ENCODE measurements at regions of chr16 and their contacts with region 1.

Region 1: GRCh38 chr16:24504472-24505345 is 34.7 kb upstream of the RBBP6 start:
- DNase-seq: peak; percentile 79
- ATAC-seq: peak; percentile 80
- H3K4me3 ChIP-seq: no peak overlapping the region
- H3K4me3 Mint-ChIP-seq: no peak overlapping the region
- H3K27ac ChIP-seq: no peak overlapping the region
- H3K27ac Mint-ChIP-seq: no peak overlapping the region
- H3K4me1 ChIP-seq: no peaks in the 10 kb centered on the region
- H3K4me1 Mint-ChIP-seq: peaks cover 1% of the 10 kb centered on the region
- H3K27me3 ChIP-seq: peaks cover 0 to 9% (median 1%) of the 10 kb centered on the region in 4 experiments
- H3K27me3 Mint-ChIP-seq: peaks cover 35% of the 10 kb centered on the region
- CTCF ChIP-seq: peak; percentile 87

Region 2: GRCh38 chr16:23729503-23730424 is 774.9 kb before region 1 on chr16:
- CTCF ChIA-PET with region 1: interaction called, 14 read pairs
- POLR2A ChIA-PET with region 1: no interaction called
- intact Hi-C with region 1: no loop called
- DNase-seq: no peak
- ATAC-seq: no peak
- H3K4me3 ChIP-seq: no peak overlapping the region
- H3K4me3 Mint-ChIP-seq: no peak overlapping the region
- H3K27ac ChIP-seq: no peak overlapping the region
- H3K27ac Mint-ChIP-seq: no peak overlapping the region
- H3K4me1 ChIP-seq: peaks cover 0 to 5% of the 10 kb centered on the region in 2 donors
- H3K4me1 Mint-ChIP-seq: peaks cover 3% of the 10 kb centered on the region
- H3K27me3 ChIP-seq: peaks cover 0 to 6% (median 0%) of the 10 kb centered on the region in 4 experiments
- H3K27me3 Mint-ChIP-seq: peaks cover 15% of the 10 kb centered on the region
- CTCF ChIP-seq: no peak

Region 3: DNA sequence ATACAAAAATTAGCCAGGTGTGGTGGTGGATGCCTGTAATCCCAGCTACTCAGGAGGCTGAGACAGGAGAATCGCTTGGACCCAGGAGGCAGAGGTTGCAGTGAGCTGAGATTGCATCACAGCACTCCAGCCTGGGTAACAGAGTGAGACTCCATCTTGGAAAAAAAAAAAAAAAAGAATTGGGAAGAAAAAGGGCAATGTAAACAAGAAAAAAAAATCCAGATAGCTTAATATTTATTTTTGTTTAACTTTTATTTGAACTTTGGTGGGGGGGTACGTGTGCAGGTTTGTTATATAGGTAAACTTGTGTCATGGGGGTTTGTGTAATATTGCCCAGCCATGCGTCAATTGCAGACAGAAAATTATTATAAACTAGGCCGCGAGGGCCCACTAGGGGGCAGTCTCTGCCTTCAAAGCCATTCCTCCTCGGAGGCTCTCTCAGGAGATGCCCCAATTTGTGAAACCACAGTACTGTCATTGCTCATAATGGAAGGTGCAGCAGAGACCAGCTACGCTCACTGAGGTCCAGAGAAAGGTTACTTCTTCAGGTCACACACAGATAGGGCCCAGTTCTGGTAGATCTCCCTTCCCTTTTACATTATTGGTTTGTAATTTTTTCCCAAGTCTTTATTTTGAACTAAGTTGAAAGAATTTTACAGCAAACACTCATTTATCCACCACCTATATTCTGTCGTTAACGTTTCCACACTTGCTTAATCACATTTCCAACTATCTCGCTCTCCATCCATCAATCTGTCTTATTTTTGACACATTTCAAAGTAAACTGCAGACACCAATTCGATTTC is 462.7 kb before region 1 on chr16:
- CTCF ChIA-PET with region 1: interaction called, 25 read pairs
- POLR2A ChIA-PET with region 1: no interaction called
- intact Hi-C with region 1: no loop called
- DNase-seq: peak; percentile 79
- ATAC-seq: peak; percentile 76
- H3K4me3 ChIP-seq: no peak overlapping the region
- H3K4me3 Mint-ChIP-seq: no peak overlapping the region
- H3K27ac ChIP-seq: peak overlapping the region in 1 of 2 donors; percentile 34
- H3K27ac Mint-ChIP-seq: peak overlapping the region; percentile 10
- H3K4me1 ChIP-seq: no peaks in the 10 kb centered on the region
- H3K4me1 Mint-ChIP-seq: peaks cover 14% of the 10 kb centered on the region
- H3K27me3 ChIP-seq: no peaks in the 10 kb centered on the region
- H3K27me3 Mint-ChIP-seq: no peaks in the 10 kb centered on the region
- CTCF ChIP-seq: peak; percentile 87

Region 4: DNA sequence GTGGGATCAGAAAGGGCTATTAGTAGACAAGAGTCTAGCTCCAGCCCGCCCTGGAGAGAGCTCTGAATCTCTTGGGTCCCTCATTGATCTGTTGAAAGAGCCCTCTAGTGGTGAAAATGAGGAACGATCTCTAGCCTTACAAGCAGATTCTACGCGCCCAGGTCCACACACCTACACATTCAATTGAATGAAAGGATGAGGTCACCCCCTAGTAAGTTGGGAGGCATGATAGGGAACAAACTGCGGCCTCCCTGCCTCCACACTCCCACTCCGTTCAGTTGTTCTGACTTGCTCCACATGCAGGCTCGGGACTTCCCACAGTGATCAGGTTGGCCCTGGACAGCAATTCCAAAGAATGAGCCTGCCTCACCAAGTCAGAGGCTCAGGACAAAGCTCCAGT is 251.5 kb before region 1 on chr16:
- CTCF ChIA-PET with region 1: interaction called, 12 read pairs
- POLR2A ChIA-PET with region 1: no interaction called
- intact Hi-C with region 1: no loop called
- DNase-seq: peak; percentile 71
- ATAC-seq: peak; percentile 66
- H3K4me3 ChIP-seq: no peak overlapping the region
- H3K4me3 Mint-ChIP-seq: no peak overlapping the region
- H3K27ac ChIP-seq: no peak overlapping the region
- H3K27ac Mint-ChIP-seq: no peak overlapping the region
- H3K4me1 ChIP-seq: no peaks in the 10 kb centered on the region
- H3K4me1 Mint-ChIP-seq: peaks cover 6% of the 10 kb centered on the region
- H3K27me3 ChIP-seq: peaks cover 0 to 44% (median 39%) of the 10 kb centered on the region in 4 experiments
- H3K27me3 Mint-ChIP-seq: peaks cover 51% of the 10 kb centered on the region
- CTCF ChIP-seq: peak; percentile 85

Region 5: DNA sequence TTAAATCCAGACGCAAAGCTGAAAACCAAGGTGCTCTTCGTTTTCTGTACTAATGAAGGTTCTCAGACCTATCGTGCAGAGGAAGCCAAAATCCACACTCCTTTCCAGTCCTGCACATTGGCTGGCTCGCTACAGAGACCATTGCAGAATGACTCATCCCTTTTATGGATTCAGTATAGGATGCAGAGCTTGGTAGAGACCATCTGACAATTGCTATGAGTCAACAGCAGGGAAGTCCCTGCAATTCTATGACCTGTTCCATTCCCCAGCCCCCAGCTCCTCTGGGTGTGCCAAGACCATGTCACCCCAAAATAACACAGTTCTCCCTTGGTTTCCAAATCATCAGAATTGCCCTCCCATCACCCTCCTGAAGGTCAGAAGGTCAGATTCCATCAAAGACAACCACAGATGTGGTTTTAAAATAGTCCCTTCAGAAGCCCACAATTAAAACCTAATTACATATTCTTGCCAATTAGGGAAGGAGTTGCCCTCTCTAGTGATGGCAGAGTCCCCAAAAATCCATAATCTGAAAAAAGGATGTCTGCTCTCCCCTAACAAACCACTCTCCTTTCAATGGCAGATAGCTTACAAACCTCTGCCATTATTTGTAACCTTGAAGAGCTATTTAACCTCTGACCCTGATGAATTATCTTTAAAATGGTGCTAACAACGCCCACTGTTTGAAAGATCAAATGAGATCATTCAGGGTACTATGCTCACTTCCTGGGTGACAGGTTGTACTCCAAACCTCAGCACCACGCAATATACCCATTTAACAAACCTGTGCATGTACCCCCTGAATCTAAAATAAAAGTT is 73.6 kb before region 1 on chr16:
- CTCF ChIA-PET with region 1: no interaction called
- POLR2A ChIA-PET with region 1: no interaction called
- intact Hi-C with region 1: no loop called
- DNase-seq: no peak
- ATAC-seq: no peak
- H3K4me3 ChIP-seq: no peak overlapping the region
- H3K4me3 Mint-ChIP-seq: no peak overlapping the region
- H3K27ac ChIP-seq: no peak overlapping the region
- H3K27ac Mint-ChIP-seq: no peak overlapping the region
- H3K4me1 ChIP-seq: no peaks in the 10 kb centered on the region
- H3K4me1 Mint-ChIP-seq: no peaks in the 10 kb centered on the region
- H3K27me3 ChIP-seq: peaks cover 0 to 4% (median 1%) of the 10 kb centered on the region in 4 experiments
- H3K27me3 Mint-ChIP-seq: peaks cover 42% of the 10 kb centered on the region
- CTCF ChIP-seq: no peak

Region 6: GRCh38 chr16:24491726-24492125 is 13.0 kb before region 1 on chr16:
- CTCF ChIA-PET with region 1: interaction called, 12 read pairs
- POLR2A ChIA-PET with region 1: no interaction called
- intact Hi-C with region 1: no loop called
- DNase-seq: no peak
- ATAC-seq: no peak
- H3K4me3 ChIP-seq: no peak overlapping the region
- H3K4me3 Mint-ChIP-seq: no peak overlapping the region
- H3K27ac ChIP-seq: no peak overlapping the region
- H3K27ac Mint-ChIP-seq: no peak overlapping the region
- H3K4me1 ChIP-seq: no peaks in the 10 kb centered on the region
- H3K4me1 Mint-ChIP-seq: no peaks in the 10 kb centered on the region
- H3K27me3 ChIP-seq: peaks cover 0 to 2% (median 0%) of the 10 kb centered on the region in 4 experiments
- H3K27me3 Mint-ChIP-seq: peaks cover 29% of the 10 kb centered on the region
- CTCF ChIP-seq: no peak

Region 7: GRCh38 chr16:24516900-24517669 is 12.4 kb after region 1 on chr16:
- CTCF ChIA-PET with region 1: interaction called, 24 read pairs
- POLR2A ChIA-PET with region 1: no interaction called
- intact Hi-C with region 1: no loop called
- DNase-seq: peak; percentile 80
- ATAC-seq: peak; percentile 68
- H3K4me3 ChIP-seq: no peak overlapping the region
- H3K4me3 Mint-ChIP-seq: peak overlapping the region; percentile 68
- H3K27ac ChIP-seq: no peak overlapping the region
- H3K27ac Mint-ChIP-seq: no peak overlapping the region
- H3K4me1 ChIP-seq: peaks cover 6 to 8% of the 10 kb centered on the region in 2 donors
- H3K4me1 Mint-ChIP-seq: peaks cover 6% of the 10 kb centered on the region
- H3K27me3 ChIP-seq: no peaks in the 10 kb centered on the region
- H3K27me3 Mint-ChIP-seq: peaks cover 8% of the 10 kb centered on the region
- CTCF ChIP-seq: peak; percentile 86

Measured in B cell (primary cell).